Keratinocyte (primary cell): ENCODE measurements at regions of chr21 and their contacts with region 1.

Region 1: DNA sequence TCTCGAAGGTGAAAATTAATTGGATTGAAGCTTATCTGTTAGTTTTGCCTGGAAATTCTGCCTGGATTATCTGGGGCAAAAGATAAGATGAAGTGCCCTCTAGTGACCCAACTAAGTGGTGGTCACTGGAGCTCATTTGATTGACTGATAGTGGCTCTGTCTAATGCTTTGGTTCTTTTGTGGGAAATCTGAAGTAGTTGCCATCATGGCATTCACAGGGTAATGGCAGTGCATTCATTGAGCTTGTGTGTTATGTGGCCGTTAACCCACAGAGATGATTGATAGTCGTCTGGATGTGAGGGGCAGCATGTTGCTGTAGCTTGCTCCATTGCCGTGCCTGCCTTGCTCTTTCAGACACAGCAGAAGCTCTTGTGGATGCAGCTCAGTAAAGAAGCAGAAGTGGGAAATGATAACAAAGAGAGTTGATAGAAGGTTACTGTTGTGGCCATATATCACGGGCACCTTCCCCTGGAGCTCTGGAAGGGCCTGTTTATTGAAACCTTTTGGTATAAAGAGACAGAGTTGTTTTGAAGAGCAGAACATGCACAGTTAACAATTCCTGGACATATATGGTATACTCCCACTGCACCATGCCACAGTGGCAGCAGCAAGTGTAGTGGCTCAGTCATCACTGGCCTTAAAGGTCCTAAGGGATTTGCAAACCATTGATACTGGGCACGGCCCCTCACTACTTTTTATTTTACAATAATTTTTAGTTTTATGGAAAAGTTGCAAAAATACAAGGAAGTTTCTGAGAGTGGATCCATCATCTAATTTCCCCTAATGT is 42.0 kb downstream of the CXADR start:
- DNase-seq: no peak
- H3K4me3 ChIP-seq: no peak overlapping the region
- H3K27ac ChIP-seq: no peak overlapping the region
- H3K4me1 ChIP-seq: no peaks in the 10 kb centered on the region
- H3K27me3 ChIP-seq: no peaks in the 10 kb centered on the region
- CTCF ChIP-seq: peak; percentile 23 to 52 (median 42)

Region 2: GRCh38 chr21:17387030-17387617 is 167.7 kb before region 1 on chr21:
- dilution Hi-C with region 1: loop called (anchors 25 kb)
- DNase-seq: no peak
- H3K4me3 ChIP-seq: no peak overlapping the region
- H3K27ac ChIP-seq: no peak overlapping the region
- H3K4me1 ChIP-seq: no peaks in the 10 kb centered on the region
- H3K27me3 ChIP-seq: no peaks in the 10 kb centered on the region
- CTCF ChIP-seq: peak in 2 of 3 experiments; percentile 41